Activated CD8-positive, alpha-beta T cell treated with anti-CD3 and anti-CD28 coated beads for 36 hours (primary cell): ENCODE measurements at regions of chr21 and their contacts with region 1.

Region 1: GRCh38 chr21:36209626-36210171 is 53.1 kb downstream of the DOP1B start:
- DNase-seq: peak; percentile 74
- ATAC-seq: peak; percentile 49
- H3K4me3 Mint-ChIP-seq: no peak overlapping the region
- H3K27ac Mint-ChIP-seq: no peak overlapping the region
- H3K4me1 Mint-ChIP-seq: peaks cover 13% of the 10 kb centered on the region
- H3K27me3 Mint-ChIP-seq: no peaks in the 10 kb centered on the region
- CTCF ChIP-seq: peak; percentile 42

Region 2: GRCh38 chr21:36135391-36136102 is 74.2 kb before region 1 on chr21:
- CTCF ChIA-PET with region 1: interaction called, 29 read pairs
- POLR2A ChIA-PET with region 1: no interaction called
- intact Hi-C with region 1: no loop called
- DNase-seq: peak; percentile 84
- ATAC-seq: peak; percentile 77
- H3K4me3 Mint-ChIP-seq: peak overlapping the region; percentile 89
- H3K27ac Mint-ChIP-seq: peak overlapping the region; percentile 85
- H3K4me1 Mint-ChIP-seq: peaks cover 23% of the 10 kb centered on the region
- H3K27me3 Mint-ChIP-seq: no peaks in the 10 kb centered on the region
- CTCF ChIP-seq: no peak

Region 3: DNA sequence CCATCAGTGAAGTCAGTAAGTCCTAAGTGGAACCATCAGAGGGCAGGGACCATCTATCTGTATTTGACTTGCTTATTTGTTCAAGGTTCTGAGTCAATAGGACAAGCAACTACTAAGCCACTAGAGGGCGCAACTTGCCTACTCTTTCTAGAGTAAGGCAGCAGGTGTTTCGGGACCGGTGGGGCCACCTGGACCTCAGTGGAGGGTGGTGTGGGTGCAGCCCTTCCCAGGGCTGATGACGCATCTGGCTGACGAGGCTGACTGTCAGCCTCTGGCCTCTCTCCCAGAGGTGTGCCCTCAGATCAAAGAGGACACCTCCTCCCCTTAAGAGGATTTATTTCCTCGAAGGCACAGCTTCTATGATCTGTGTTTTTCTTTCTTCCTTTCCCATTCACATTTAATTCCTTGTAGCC is 68.2 kb before region 1 on chr21:
- CTCF ChIA-PET with region 1: interaction called, 29 read pairs
- POLR2A ChIA-PET with region 1: no interaction called
- intact Hi-C with region 1: loop called (anchors 1 kb)
- DNase-seq: peak; percentile 94
- ATAC-seq: peak; percentile 96
- H3K4me3 Mint-ChIP-seq: no peak overlapping the region
- H3K27ac Mint-ChIP-seq: no peak overlapping the region
- H3K4me1 Mint-ChIP-seq: peaks cover 15% of the 10 kb centered on the region
- H3K27me3 Mint-ChIP-seq: no peaks in the 10 kb centered on the region
- CTCF ChIP-seq: peak; percentile 95

Region 4: DNA sequence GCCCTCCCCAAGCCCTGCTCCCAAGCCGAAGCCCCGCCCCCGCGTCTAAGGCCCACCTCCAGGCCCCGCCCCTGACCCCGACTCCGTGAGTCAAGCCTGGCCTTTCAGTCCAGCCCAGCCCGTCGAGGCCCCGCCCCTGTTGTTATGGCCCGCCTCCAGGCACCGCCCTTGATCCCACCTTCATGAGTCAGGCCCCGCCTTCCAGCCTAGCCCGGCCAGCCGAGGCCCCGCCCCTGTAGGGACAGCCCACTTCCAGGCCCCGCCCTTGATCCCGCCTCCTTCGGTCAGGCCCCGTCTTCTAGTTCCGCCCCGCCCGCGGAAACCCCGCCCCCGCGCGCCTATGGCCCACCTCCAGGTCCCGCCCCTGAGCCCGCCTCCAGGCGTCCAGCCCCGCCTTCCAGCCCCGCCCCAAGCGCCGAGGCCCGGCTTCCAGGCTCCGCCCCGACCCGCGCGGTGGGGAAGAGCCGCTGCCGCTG is 53.3 kb before region 1 on chr21:
- CTCF ChIA-PET with region 1: interaction called, 12 read pairs
- POLR2A ChIA-PET with region 1: interaction called, 3 read pairs
- intact Hi-C with region 1: no loop called
- DNase-seq: peak; percentile 100
- ATAC-seq: peak; percentile 95
- H3K4me3 Mint-ChIP-seq: peak overlapping the region; percentile 82
- H3K27ac Mint-ChIP-seq: peak overlapping the region; percentile 49
- H3K4me1 Mint-ChIP-seq: peaks cover 26% of the 10 kb centered on the region
- H3K27me3 Mint-ChIP-seq: no peaks in the 10 kb centered on the region
- CTCF ChIP-seq: no peak

Region 5: DNA sequence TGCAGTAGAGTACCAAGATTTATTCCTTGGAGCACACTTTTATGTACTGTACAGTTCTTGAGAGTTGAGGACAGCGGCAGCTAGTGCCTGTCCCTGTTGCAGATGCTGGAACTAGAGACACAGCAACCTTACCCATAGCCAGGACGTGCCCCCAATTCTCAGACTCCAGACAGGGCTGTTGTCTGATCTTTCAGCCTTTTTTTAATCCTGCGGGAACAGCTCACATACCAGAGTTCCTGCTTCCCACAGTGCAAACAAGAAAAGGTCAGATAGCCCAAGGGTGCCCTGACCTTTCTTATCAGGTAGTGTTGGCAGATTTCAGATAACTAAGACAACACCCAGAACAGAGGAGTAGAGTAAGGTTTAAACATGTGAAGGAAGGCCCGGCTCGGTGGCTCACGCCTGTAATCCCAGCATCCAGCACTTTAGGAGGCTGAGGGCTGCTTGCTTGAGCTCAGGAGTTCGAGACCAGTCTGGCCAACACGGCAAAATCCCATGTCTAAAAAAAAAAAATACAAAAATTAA is 25.4 kb after region 1 on chr21:
- CTCF ChIA-PET with region 1: no interaction called
- POLR2A ChIA-PET with region 1: no interaction called
- intact Hi-C with region 1: no loop called
- DNase-seq: no peak
- ATAC-seq: no peak
- H3K4me3 Mint-ChIP-seq: no peak overlapping the region
- H3K27ac Mint-ChIP-seq: no peak overlapping the region
- H3K4me1 Mint-ChIP-seq: peaks cover 11% of the 10 kb centered on the region
- H3K27me3 Mint-ChIP-seq: no peaks in the 10 kb centered on the region
- CTCF ChIP-seq: no peak